ENCODE measurements at regions of chr17 and their contacts with region 1.

Region 1: DNA sequence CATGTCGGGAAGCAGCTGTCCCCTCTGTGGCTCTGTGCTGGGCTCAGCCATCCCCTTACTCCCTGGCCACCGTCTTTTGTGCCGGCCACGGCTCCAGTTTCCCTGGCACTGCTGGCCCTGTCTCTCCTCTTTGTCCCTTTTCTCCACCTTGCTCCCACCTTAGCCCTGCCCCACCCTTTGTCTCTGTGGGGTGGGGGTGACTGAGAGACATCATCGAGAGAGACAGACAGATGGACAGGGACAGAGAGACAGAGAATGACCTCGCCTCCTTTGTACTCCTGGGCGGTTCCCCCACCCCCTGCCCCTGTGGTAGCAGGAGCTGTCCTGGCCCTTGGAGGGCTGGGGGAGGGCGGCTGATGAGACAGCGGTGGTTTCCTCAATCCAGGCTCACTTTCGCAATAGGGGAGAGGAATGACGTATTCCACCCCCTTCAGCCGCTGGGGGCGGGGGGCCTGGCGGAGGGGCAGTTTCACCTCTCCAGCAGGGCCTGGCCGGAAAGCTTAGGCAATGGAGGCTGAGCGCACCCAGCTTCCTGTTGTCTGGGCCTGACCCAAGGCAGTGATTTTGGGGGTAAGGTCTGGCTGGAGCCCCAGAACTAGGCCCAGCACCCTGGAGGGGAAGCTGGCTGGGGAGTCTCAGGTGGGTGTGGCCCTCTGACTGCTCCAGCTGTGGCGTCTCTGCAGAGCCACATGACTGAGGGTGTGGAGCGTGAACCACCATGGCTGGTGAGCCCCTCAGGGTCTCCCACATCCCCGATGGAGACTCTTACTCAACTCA is 7.3 kb downstream of the FMNL1 start:
- DNase-seq: peak; percentile 84 to 92
- ATAC-seq: peak; percentile 43 to 68 (median 55)
- H3K4me3 ChIP-seq: peak overlapping the region; percentile 92
- H3K4me3 Mint-ChIP-seq: peak overlapping the region; percentile 98
- H3K27ac ChIP-seq: peak overlapping the region; percentile 94
- H3K27ac Mint-ChIP-seq: peak overlapping the region; percentile 99
- H3K4me1 ChIP-seq: peaks cover 93% of the 10 kb centered on the region
- H3K4me1 Mint-ChIP-seq: peaks cover 74 to 97% of the 10 kb centered on the region in 2 donors
- H3K27me3 ChIP-seq: no peaks in the 10 kb centered on the region
- H3K27me3 Mint-ChIP-seq: no peaks in the 10 kb centered on the region
- CTCF ChIP-seq: no peak

Region 2: GRCh38 chr17:43360739-43361505 is 1868.0 kb before region 1 on chr17:
- intact Hi-C with region 1: loop called (anchors 10 kb)
- DNase-seq: peak; percentile 77 to 95
- ATAC-seq: peak in 2 of 3 donors; percentile 73 to 75
- H3K4me3 ChIP-seq: peak overlapping the region; percentile 54
- H3K4me3 Mint-ChIP-seq: peak overlapping the region; percentile 91
- H3K27ac ChIP-seq: peak overlapping the region; percentile 98
- H3K27ac Mint-ChIP-seq: peak overlapping the region; percentile 98 to 99
- H3K4me1 ChIP-seq: peaks cover 10% of the 10 kb centered on the region
- H3K4me1 Mint-ChIP-seq: peaks cover 29% of the 10 kb centered on the region in 2 donors
- H3K27me3 ChIP-seq: no peaks in the 10 kb centered on the region
- H3K27me3 Mint-ChIP-seq: peaks cover 0 to 3% of the 10 kb centered on the region in 2 donors
- CTCF ChIP-seq: no peak

Region 3: DNA sequence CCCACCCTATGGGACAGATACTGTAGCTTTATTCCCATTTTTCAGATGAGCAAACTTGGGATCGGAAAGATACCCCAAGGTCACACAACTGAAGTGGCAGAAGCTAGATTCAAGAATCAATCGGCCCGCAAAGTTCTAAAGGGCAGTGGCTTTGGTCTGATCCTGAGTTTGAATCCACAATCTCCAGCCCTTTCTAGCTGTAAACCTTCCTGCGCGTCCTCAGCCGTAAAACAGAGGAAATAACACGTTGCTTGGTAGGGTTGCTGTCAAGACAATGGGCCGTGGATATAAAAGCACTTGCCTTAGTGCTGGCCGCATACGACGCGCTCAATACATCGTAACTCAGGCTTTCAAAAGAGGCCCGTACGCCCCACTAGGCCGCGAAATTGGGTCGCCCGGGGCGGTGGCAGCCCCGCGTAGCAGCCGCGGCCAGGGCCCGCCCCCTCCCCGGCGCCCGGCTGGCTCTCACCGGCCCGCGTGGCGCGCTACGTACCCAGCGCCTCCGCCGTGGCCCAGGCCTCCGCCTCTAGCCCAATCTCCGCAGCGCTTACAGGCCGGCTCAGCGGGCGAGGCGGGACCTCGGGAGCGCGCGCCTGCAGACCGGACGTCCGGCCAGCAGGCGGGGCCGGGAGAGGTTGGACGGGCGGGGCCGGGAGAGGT is 177.8 kb before region 1 on chr17 and contains the start of gene DCAKD:
- intact Hi-C with region 1: no loop called
- DNase-seq: peak; percentile 83 to 95
- ATAC-seq: peak; percentile 96 to 98 (median 97)
- H3K4me3 ChIP-seq: peak within 1 kb of the TSS; percentile 78
- H3K4me3 Mint-ChIP-seq: peak within 1 kb of the TSS; percentile 89
- H3K27ac ChIP-seq: peak within 1 kb of the TSS; percentile 93
- H3K27ac Mint-ChIP-seq: peak within 1 kb of the TSS; percentile 93 to 97
- H3K4me1 ChIP-seq: peaks cover 30% of the 10 kb centered on the region
- H3K4me1 Mint-ChIP-seq: peaks cover 22 to 24% of the 10 kb centered on the region in 2 donors
- H3K27me3 ChIP-seq: no peaks in the 10 kb centered on the region
- H3K27me3 Mint-ChIP-seq: no peaks in the 10 kb centered on the region
- CTCF ChIP-seq: no peak
- total RNA-seq, gene DCAKD: 15.4 to 21.4 (median 21.1) TPM

Region 4: DNA sequence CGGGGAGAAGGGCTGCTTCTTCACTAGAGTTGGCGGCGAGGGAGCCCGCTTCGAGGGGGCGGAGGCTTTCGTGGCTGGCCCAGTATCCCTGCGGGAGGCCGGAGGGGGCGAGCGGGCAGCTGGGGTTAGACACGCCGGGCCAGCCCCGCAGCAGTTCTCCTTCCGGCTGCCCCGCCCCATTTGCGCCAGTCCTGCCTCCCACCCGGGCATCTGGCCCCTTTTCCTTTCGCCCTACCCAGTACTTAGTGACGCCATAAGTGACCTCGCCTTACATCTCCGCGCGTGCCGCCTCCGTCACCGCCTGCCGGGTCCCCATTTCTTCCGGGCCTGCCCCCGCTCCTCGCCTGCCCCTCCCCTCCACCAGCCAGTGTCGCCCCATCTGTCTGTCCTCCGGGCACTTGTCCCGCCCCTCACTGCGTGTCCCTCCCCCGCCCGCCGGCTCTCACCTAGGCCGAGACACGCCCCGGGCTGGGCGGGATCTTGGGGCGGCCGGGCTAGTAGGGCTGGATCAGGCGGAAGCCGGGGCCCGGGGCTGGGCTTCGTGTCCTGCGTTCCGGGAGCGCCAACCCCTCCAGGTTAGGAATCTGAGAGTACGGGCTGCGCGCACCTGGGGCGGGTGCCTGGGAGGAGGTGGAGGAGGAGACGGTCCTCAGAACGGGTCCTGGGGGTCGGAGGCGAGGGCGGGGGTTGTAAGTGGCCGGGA is 18.6 kb after region 1 on chr17:
- intact Hi-C with region 1: loop called (anchors 1 kb)
- DNase-seq: peak; percentile 89 to 96
- ATAC-seq: peak; percentile 83 to 93 (median 83)
- H3K4me3 ChIP-seq: peak overlapping the region; percentile 72
- H3K4me3 Mint-ChIP-seq: peak overlapping the region; percentile 87
- H3K27ac ChIP-seq: peak overlapping the region; percentile 81
- H3K27ac Mint-ChIP-seq: peak overlapping the region; percentile 87 to 89
- H3K4me1 ChIP-seq: peaks cover 36% of the 10 kb centered on the region
- H3K4me1 Mint-ChIP-seq: peaks cover 33 to 61% of the 10 kb centered on the region in 2 donors
- H3K27me3 ChIP-seq: no peaks in the 10 kb centered on the region
- H3K27me3 Mint-ChIP-seq: no peaks in the 10 kb centered on the region
- CTCF ChIP-seq: no peak

Region 5: DNA sequence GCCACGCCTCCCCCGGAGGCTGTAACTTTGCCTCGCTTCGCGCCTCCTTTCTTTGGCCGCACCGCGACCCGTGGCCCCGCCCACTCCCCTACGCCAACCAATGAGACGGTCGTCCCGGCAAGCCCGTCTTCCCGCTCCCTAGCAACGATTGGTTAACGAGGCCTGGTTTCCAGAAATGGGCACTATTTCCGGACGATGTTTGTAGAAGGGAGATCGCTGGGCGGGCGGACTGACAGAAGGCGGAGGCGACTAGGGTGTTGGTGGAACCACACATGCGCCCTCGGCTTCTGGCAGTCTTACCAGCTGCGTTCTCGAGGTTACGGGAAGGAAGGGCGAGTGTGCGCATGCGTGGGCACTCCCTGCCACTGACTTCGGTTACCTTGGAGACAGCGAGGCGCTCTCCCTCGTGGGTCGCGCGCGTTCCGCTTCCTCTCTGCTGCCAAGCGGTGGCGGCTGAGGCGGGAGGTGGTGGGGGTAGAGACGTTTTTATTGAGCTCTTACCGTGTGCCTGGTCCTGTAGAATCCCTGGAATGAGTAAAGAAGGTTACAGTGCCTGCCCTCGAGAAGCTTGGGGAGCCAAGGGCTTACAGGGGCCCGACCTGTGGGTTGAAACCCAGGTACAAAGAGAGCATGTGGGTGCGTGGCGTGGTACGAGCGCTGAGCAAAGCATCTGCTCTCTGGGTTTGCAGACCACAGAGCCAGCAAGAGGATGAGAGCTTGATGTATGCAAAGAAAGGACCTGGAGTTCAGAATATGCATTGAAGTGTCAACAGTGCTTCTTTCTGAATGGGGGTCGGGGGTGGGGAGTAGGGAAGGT is 88.4 kb after region 1 on chr17:
- intact Hi-C with region 1: loop called (anchors 2 kb)
- DNase-seq: peak; percentile 99 to 100
- ATAC-seq: peak; percentile 76 to 93 (median 81)
- H3K4me3 ChIP-seq: peak overlapping the region; percentile 38
- H3K4me3 Mint-ChIP-seq: peak overlapping the region; percentile 92
- H3K27ac ChIP-seq: peak overlapping the region; percentile 65
- H3K27ac Mint-ChIP-seq: peak overlapping the region; percentile 91 to 92
- H3K4me1 ChIP-seq: peaks cover 64% of the 10 kb centered on the region
- H3K4me1 Mint-ChIP-seq: peaks cover 80 to 81% of the 10 kb centered on the region in 2 donors
- H3K27me3 ChIP-seq: no peaks in the 10 kb centered on the region
- H3K27me3 Mint-ChIP-seq: no peaks in the 10 kb centered on the region
- CTCF ChIP-seq: no peak

Measured in natural killer cell (primary cell).